ENCODE measurements at regions of chr22 and their contacts with region 1.

Region 1: DNA sequence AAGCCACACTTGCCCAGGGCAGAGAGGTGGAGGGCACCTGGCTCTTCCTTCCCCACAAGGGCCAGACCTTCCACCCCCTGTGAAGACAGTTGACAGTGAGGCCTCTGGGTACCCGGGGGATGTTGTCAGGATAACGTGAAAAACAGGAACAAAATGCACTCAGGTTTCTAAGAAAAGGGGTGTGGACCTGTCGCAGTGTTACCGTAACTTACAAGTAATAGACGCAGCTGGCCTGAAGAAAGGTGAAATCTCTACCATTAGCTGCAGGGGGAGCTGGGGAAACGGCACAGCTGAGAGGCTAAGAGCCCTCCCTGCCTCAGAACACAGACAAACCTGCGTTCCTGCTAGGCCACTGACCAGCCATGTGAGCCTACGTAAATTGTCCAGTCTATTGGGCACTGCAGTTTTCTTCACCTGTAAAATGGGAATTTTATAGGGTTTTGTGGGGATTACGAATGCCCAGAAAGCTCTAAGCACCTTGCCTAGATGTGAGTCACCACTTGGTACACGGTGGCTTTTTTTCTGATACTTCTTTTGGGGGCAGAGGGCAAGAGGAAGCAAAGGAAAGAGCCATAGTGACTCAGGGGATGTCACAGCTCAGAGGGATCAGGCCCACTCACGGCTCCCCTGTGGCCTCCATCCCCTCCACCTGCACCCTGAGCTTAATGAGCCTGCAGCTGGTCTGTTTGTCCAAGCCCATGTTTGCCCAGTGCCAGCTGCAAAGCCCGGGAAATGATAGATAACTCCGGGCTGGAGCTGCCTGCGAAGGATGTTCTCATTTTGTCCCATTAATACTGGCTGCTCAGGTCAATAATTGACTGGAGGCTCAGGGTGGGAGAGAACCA is 18.4 kb upstream of the CABP7 start:
- DNase-seq: peak; percentile 31 to 44
- ATAC-seq: peak; percentile 52 to 63
- H3K4me3 ChIP-seq: no peak overlapping the region
- H3K27ac ChIP-seq: peak overlapping the region in 1 of 2 experiments; percentile 78; a peak in 3 of 6 replicates
- H3K4me1 ChIP-seq: peaks cover 39% of the 10 kb centered on the region
- CTCF ChIP-seq: no peak
- EP300 ChIP-seq: no peak
- POLR2A ChIP-seq: no peak
- RAD21 ChIP-seq: peak in 1 of 2 experiments; percentile 44; a peak in 3 of 5 replicates

Region 2: DNA sequence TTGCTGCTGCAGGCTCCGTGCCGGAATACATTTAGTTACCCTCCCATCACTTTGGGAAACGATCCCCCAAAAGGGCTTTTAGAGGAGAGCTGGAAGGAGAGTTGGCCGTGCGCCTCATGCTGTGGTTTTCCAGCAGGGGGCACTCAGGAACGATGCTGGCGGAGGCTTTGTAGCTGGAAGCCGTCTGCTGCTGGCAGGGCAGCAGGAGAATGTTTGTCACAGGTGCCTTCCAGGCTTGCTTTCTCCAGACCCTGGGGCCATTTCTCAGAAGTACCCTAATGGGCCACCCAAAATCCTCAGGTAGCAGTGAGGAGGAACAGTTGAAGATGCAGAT is 11.5 kb before region 1 on chr22:
- CTCF ChIA-PET with region 1: interaction called, 17 read pairs
- POLR2A ChIA-PET with region 1: no interaction called
- DNase-seq: peak in 1 of 2 experiments; percentile 30
- ATAC-seq: peak; percentile 57 to 85; a peak in 4 of 6 replicates
- H3K4me3 ChIP-seq: no peak overlapping the region
- H3K27ac ChIP-seq: no peak overlapping the region
- H3K4me1 ChIP-seq: no peaks in the 10 kb centered on the region
- CTCF ChIP-seq: peak; percentile 58
- EP300 ChIP-seq: no peak
- POLR2A ChIP-seq: no peak
- RAD21 ChIP-seq: peak; percentile 62 to 67; a peak in 4 of 5 replicates

Region 3: GRCh38 chr22:29716814-29717545 is 15.6 kb after region 1 on chr22:
- CTCF ChIA-PET with region 1: interaction called, 10 read pairs
- POLR2A ChIA-PET with region 1: no interaction called
- DNase-seq: peak in 1 of 2 experiments; percentile 55
- ATAC-seq: peak; percentile 62 to 75
- H3K4me3 ChIP-seq: no peak overlapping the region
- H3K27ac ChIP-seq: no peak overlapping the region
- H3K4me1 ChIP-seq: peaks cover 4% of the 10 kb centered on the region; the same call in 1 of the 3 replicates
- CTCF ChIP-seq: no peak
- EP300 ChIP-seq: no peak
- POLR2A ChIP-seq: no peak
- RAD21 ChIP-seq: no peak

Measured in A549 (cell line).